Activated CD8-positive, alpha-beta T cell treated with anti-CD3 and anti-CD28 coated beads for 36 hours (primary cell): ENCODE measurements at regions of chr22 and their contacts with region 1.

Region 1: DNA sequence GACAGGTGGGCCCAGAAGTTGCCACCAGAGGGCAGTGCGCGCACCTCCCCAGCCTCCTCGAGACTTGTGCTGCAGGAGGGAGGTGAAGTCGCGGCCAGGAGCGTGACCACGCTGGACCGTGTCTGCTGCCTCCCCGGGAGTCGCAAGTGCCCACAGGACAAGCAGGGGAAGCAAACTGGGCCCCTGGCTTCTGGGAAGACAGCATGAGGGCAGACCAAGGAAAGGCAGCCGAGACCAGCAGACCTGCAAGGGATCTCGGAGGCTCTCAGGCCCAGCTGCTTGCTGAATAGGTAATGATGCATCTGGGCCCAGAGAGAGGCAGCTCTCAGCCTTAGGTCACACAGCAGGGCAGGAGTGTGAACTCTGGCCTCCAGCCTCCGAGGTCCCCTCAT is 17.0 kb upstream of the IL2RB start:
- DNase-seq: peak; percentile 93
- ATAC-seq: peak; percentile 18
- H3K4me3 Mint-ChIP-seq: peak overlapping the region; percentile 72
- H3K27ac Mint-ChIP-seq: peak overlapping the region; percentile 73
- H3K4me1 Mint-ChIP-seq: peaks cover 93% of the 10 kb centered on the region
- H3K27me3 Mint-ChIP-seq: no peaks in the 10 kb centered on the region
- CTCF ChIP-seq: peak; percentile 87

Region 2: DNA sequence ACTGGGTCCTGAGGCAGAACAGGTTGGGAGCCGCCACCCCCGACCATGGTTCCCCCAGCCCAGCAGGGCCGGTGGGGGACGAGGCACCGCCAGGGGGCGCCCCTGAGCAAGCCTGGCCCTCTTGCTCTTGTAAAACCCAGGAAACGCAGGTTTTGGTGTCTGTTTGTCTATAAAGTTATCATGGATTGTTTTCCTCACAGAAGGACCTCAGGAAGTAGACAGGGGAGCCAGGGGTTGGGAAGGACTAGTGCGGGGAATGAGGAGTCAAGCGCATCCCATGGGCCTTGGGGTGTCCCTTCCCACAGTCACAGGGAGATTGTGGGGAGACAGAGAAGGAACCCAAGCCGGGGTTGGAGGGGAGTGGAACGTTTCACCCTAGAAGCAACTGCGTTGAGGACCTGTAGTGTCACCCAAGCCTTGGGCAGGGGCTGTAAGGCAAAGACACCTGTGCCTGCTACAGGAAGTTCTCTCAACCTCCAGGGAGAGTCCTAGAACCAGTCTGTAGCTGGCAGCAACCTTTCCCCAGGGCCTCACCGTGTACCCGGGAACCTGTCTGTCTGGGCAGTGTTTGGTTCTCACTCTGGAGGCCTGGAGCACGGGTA is 88.7 kb before region 1 on chr22:
- CTCF ChIA-PET with region 1: interaction called, 13 read pairs
- POLR2A ChIA-PET with region 1: interaction called, 3 read pairs
- intact Hi-C with region 1: no loop called
- DNase-seq: peak; percentile 90
- ATAC-seq: no peak
- H3K4me3 Mint-ChIP-seq: peak overlapping the region; percentile 23
- H3K27ac Mint-ChIP-seq: peak overlapping the region; percentile 99
- H3K4me1 Mint-ChIP-seq: peaks cover 56% of the 10 kb centered on the region
- H3K27me3 Mint-ChIP-seq: peaks cover 16% of the 10 kb centered on the region
- CTCF ChIP-seq: peak; percentile 99

Region 3: GRCh38 chr22:37139762-37140161 is 26.9 kb before region 1 on chr22:
- CTCF ChIA-PET with region 1: interaction called, 6 read pairs
- POLR2A ChIA-PET with region 1: interaction called, 14 read pairs
- intact Hi-C with region 1: no loop called
- DNase-seq: no peak
- ATAC-seq: peak; percentile 25
- H3K4me3 Mint-ChIP-seq: no peak overlapping the region
- H3K27ac Mint-ChIP-seq: peak overlapping the region; percentile 92
- H3K4me1 Mint-ChIP-seq: peaks cover 76% of the 10 kb centered on the region
- H3K27me3 Mint-ChIP-seq: no peaks in the 10 kb centered on the region
- CTCF ChIP-seq: no peak

Region 4: DNA sequence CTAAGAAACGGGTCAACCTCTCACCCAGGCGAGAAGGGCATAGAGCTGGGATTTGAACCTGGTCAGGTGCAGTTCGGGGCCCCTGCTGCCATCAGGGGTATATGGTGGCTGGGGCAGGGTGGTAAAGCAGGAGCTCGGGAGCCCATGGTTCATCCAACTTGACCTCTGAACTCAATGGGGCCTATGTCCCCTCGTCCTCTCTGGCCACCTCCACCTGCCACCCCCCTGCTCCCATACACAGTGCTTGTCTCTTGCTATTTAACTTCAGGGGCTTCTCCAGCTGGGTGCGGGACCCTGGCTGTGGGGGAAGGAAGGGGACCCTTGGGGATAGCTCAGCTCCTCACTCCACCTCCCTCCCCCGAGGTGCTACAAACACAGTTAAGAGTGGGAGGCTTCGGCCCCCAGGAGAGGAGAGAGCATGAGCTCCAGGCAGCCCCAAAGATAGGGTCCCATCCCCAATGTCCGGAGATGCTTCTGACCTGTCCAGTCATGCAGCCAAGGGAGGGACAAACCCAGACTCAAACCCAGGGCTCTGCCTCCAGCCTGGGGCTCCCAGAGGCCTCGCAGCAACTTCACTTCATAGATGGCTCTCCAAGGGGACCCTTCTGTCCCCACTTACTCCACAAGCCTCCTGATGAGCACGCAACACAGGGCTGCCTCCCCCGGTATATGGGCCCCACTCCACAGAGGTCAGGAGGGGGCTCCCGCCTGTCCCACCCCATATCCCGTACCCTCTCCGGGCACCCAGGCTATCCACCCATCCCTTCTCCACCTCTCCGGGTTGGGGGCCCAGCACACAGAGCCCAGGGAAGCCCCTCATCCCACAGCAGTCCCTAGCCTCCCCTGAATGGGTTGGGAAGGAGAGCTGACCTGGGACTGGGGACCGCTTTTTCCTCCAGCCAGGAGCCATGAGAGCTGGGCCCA is 17.7 kb before region 1 on chr22:
- CTCF ChIA-PET with region 1: interaction called, 119 read pairs
- POLR2A ChIA-PET with region 1: interaction called, 122 read pairs
- intact Hi-C with region 1: no loop called
- DNase-seq: no peak
- ATAC-seq: no peak
- H3K4me3 Mint-ChIP-seq: peak overlapping the region; percentile 87
- H3K27ac Mint-ChIP-seq: peak overlapping the region; percentile 93
- H3K4me1 Mint-ChIP-seq: peaks cover 60% of the 10 kb centered on the region
- H3K27me3 Mint-ChIP-seq: no peaks in the 10 kb centered on the region
- CTCF ChIP-seq: no peak

Region 5: DNA sequence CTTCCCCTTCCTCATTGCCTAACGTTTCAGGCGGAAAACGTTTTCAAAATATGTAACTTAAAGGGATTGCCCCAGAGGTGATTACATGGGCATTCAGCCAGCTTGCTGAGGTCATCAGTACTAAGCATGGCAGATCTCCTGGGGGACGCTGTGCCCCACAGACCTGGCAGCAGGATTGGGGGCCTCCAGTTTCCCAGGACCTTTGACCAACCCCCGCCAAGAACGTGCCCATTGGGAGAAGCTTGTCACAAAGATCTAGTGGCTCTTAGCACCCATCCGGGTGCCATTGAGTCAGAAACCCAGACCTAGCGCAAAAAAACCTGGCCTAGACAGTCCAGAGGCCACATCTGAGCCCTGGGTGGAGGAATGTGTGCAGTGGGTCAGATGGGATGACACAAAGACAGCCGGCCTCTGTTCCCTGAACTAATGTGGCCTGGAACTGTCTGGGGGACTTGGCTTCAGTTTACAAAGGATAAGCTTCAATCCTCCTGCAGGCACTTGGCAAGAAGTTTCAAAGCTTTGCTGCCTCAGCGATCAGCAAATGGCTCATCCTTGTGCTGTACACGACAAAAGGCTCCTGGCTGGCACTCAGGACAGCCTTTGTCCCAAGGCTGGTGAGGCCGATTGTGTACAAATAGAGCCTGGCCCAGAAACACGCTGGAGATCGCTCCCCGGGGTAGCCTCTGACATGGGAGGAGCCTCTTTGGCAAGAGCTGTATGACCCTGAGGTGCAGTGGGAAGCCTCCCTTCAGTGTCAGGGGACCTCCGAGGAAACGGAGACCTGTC is 11.9 kb after region 1 on chr22:
- CTCF ChIA-PET with region 1: interaction called, 16 read pairs
- POLR2A ChIA-PET with region 1: interaction called, 9 read pairs
- intact Hi-C with region 1: no loop called
- DNase-seq: no peak
- ATAC-seq: no peak
- H3K4me3 Mint-ChIP-seq: no peak overlapping the region
- H3K27ac Mint-ChIP-seq: no peak overlapping the region
- H3K4me1 Mint-ChIP-seq: peaks cover 22% of the 10 kb centered on the region
- H3K27me3 Mint-ChIP-seq: no peaks in the 10 kb centered on the region
- CTCF ChIP-seq: no peak

Region 6: GRCh38 chr22:37183432-37184361 is 17.0 kb after region 1 on chr22:
- CTCF ChIA-PET with region 1: interaction called, 16 read pairs
- POLR2A ChIA-PET with region 1: interaction called, 4 read pairs
- intact Hi-C with region 1: no loop called
- DNase-seq: peak; percentile 39
- ATAC-seq: peak; percentile 24
- H3K4me3 Mint-ChIP-seq: no peak overlapping the region
- H3K27ac Mint-ChIP-seq: no peak overlapping the region
- H3K4me1 Mint-ChIP-seq: peaks cover 50% of the 10 kb centered on the region
- H3K27me3 Mint-ChIP-seq: no peaks in the 10 kb centered on the region
- CTCF ChIP-seq: no peak

Region 7: DNA sequence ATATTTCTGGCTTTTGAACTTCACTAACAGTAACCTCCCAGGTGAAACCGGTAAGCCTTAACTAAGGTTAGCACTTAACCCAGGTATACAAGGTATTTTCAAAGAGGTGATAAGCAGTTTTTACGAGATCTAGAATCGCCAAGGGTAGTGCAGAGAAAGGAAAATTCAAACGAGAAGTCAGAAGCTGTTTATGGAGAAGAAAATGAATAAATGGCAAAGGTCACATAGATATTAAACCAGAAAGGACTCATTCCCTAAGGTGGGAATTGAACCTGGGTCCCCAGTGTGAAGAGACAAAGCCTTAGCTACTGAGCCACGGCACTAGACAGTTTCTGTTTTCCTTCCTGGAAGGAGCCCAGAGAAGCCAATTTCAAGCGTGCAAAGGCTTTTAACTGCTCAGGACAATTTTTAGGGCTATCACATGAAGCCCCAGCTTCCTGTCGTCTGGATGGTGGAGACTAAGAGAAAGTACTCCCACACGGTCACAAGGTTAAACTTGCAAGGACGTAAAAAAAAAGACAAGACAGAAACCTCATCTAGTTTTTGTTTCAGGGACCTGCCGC is 27.0 kb after region 1 on chr22:
- CTCF ChIA-PET with region 1: interaction called, 102 read pairs
- POLR2A ChIA-PET with region 1: interaction called, 18 read pairs
- intact Hi-C with region 1: loop called (anchors 2 kb)
- DNase-seq: peak; percentile 71
- ATAC-seq: peak; percentile 59
- H3K4me3 Mint-ChIP-seq: peak overlapping the region; percentile 40
- H3K27ac Mint-ChIP-seq: peak overlapping the region; percentile 83
- H3K4me1 Mint-ChIP-seq: peaks cover 70% of the 10 kb centered on the region
- H3K27me3 Mint-ChIP-seq: no peaks in the 10 kb centered on the region
- CTCF ChIP-seq: no peak

Region 8: GRCh38 chr22:37253126-37253660 is 86.5 kb after region 1 on chr22:
- CTCF ChIA-PET with region 1: no interaction called
- POLR2A ChIA-PET with region 1: no interaction called
- intact Hi-C with region 1: no loop called
- DNase-seq: no peak
- ATAC-seq: no peak
- H3K4me3 Mint-ChIP-seq: no peak overlapping the region
- H3K27ac Mint-ChIP-seq: no peak overlapping the region
- H3K4me1 Mint-ChIP-seq: peaks cover 29% of the 10 kb centered on the region
- H3K27me3 Mint-ChIP-seq: no peaks in the 10 kb centered on the region
- CTCF ChIP-seq: no peak